ENCODE measurements at regions of chr3 and their contacts with region 1.

Region 1: DNA sequence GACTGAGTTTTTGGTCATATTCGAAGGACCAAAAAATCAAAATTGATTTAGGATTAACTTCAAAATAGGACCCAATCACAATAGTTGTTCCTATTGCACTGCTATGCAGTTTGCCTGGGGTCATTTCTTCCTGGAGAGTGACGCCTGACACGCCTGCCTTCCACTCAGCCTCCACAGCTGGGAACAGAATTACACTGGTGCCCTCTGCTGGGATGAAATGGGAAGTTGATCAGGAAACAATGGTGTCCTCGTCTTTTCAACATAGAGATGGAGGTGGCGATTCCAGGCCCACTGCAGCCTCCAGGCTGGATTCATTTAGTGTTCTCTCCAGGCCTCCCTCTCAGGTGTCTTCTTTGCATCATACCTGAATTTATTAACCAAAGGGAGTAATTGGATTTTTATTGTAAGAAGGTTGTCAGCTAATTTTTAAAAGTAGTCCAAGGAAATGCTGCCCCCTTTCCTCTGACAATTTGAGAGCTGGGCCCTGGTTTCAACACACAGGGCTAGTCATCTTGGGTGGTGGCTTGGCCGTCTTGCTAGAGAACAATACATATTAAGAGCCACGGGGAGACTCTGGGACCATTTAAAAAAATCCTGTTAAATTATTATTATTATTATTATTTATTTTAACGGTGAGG is 69.7 kb downstream of the GAP43 start:
- DNase-seq: peak; percentile 82
- H3K4me3 Mint-ChIP-seq: no peak overlapping the region
- H3K27ac Mint-ChIP-seq: no peak overlapping the region
- H3K4me1 Mint-ChIP-seq: peaks cover 12% of the 10 kb centered on the region
- H3K27me3 Mint-ChIP-seq: no peaks in the 10 kb centered on the region
- CTCF ChIP-seq: peak; percentile 63

Region 2: GRCh38 chr3:115741650-115742049 is 48.6 kb after region 1 on chr3:
- CTCF ChIA-PET with region 1: no interaction called
- intact Hi-C with region 1: no loop called
- DNase-seq: no peak
- H3K4me3 Mint-ChIP-seq: no peak overlapping the region
- H3K27ac Mint-ChIP-seq: no peak overlapping the region
- H3K4me1 Mint-ChIP-seq: no peaks in the 10 kb centered on the region
- H3K27me3 Mint-ChIP-seq: peaks cover 10% of the 10 kb centered on the region
- CTCF ChIP-seq: no peak

Region 3: GRCh38 chr3:115783938-115784738 is 91.1 kb after region 1 on chr3:
- CTCF ChIA-PET with region 1: interaction called, 4 read pairs
- intact Hi-C with region 1: loop called (anchors 10 kb)
- DNase-seq: peak; percentile 97
- H3K4me3 Mint-ChIP-seq: peak overlapping the region; percentile 86
- H3K27ac Mint-ChIP-seq: peak overlapping the region; percentile 79
- H3K4me1 Mint-ChIP-seq: peaks cover 38% of the 10 kb centered on the region
- H3K27me3 Mint-ChIP-seq: no peaks in the 10 kb centered on the region
- CTCF ChIP-seq: peak; percentile 93

Region 4: GRCh38 chr3:116453666-116454346 is 760.8 kb after region 1 on chr3:
- CTCF ChIA-PET with region 1: no interaction called
- intact Hi-C with region 1: no loop called
- DNase-seq: no peak
- H3K4me3 Mint-ChIP-seq: no peak overlapping the region
- H3K27ac Mint-ChIP-seq: no peak overlapping the region
- H3K4me1 Mint-ChIP-seq: peaks cover 7% of the 10 kb centered on the region
- H3K27me3 Mint-ChIP-seq: no peaks in the 10 kb centered on the region
- CTCF ChIP-seq: peak; percentile 16

Measured in Calu3 (cell line).